HEK293 (cell line): ENCODE measurements at regions of chr3 and their contacts with region 1.

Region 1: DNA sequence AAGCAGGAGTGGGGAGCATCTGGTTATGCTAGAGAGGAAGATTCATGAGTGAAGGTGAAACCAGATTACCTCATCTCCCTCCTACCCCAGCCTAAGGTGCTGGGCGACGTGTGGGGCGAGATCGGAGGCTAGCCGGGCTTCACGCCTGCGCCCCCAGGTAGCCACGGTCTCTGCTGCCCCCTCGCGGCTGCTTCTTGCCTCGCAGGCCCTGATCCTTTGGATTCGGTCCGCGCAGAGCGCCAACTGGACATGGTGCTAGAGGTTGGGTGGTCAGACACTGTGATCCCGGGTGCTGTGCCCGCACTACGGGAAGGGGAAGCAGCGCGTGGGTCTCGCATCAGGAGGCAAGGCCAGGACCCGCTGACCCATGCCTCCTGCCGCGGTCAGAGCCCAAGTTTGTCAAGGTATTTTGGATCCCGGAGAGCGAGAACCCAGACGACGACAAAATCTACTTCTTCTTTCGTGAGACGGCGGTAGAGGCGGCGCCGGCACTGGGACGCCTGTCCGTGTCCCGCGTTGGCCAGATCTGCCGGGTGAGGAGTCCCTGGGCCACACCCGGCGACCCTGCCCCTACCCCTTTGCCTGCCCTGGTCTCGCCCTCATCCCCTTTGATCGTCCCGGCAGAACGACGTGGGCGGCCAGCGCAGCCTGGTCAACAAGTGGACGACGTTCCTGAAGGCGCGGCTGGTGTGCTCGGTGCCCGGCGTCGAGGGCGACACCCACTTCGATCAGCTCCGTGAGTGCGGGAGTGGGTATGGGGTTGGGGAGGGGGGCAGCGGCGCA is 4.2 kb downstream of the SEMA3B start:
- H3K4me3 ChIP-seq: no peak overlapping the region
- H3K27ac ChIP-seq: no peak overlapping the region
- H3K4me1 ChIP-seq: no peaks in the 10 kb centered on the region
- CTCF ChIP-seq: peak; percentile 94

Region 2: GRCh38 chr3:50138266-50139200 is 134.6 kb before region 1 on chr3:
- CTCF ChIA-PET with region 1: interaction called, 5 read pairs
- POLR2A ChIA-PET with region 1: interaction called, 10 read pairs
- H3K4me3 ChIP-seq: no peak overlapping the region
- H3K27ac ChIP-seq: no peak overlapping the region
- H3K4me1 ChIP-seq: peaks cover 3% of the 10 kb centered on the region; the same call in 1 of the 2 replicates
- CTCF ChIP-seq: no peak

Region 3: GRCh38 chr3:50260027-50260941 is 12.8 kb before region 1 on chr3:
- CTCF ChIA-PET with region 1: interaction called, 38 read pairs
- POLR2A ChIA-PET with region 1: interaction called, 3 read pairs
- H3K4me3 ChIP-seq: peak overlapping the region; percentile 36
- H3K27ac ChIP-seq: peak overlapping the region; percentile 86
- H3K4me1 ChIP-seq: peaks cover 3% of the 10 kb centered on the region; the same call in 1 of the 2 replicates
- CTCF ChIP-seq: peak; percentile 75; the same call in 1 of the 2 replicates

Region 4: GRCh38 chr3:50358911-50359759 is 86.0 kb after region 1 on chr3 and contains the start of gene TMEM115:
- CTCF ChIA-PET with region 1: no interaction called
- POLR2A ChIA-PET with region 1: no interaction called
- H3K4me3 ChIP-seq: peak within 1 kb of the TSS; percentile 82
- H3K27ac ChIP-seq: peak within 1 kb of the TSS; percentile 84
- H3K4me1 ChIP-seq: no peaks in the 10 kb centered on the region
- CTCF ChIP-seq: no peak